ENCODE measurements at regions of chr17 and their contacts with region 1.

Region 1: GRCh38 chr17:74961657-74962490 is 10.7 kb downstream of the HID1 start:
- DNase-seq: peak; percentile 87
- ATAC-seq: peak; percentile 72
- H3K4me3 ChIP-seq: no peak overlapping the region
- H3K4me3 Mint-ChIP-seq: no peak overlapping the region
- H3K27ac ChIP-seq: no peak overlapping the region
- H3K27ac Mint-ChIP-seq: no peak overlapping the region
- H3K4me1 ChIP-seq: peaks cover 2 to 16% of the 10 kb centered on the region in 2 donors
- H3K4me1 Mint-ChIP-seq: peaks cover 7% of the 10 kb centered on the region
- H3K27me3 ChIP-seq: peaks cover 0 to 9% (median 0%) of the 10 kb centered on the region in 4 experiments
- H3K27me3 Mint-ChIP-seq: peaks cover 11% of the 10 kb centered on the region
- CTCF ChIP-seq: peak; percentile 88

Region 2: GRCh38 chr17:74552037-74552436 is 409.8 kb before region 1 on chr17:
- CTCF ChIA-PET with region 1: no interaction called
- POLR2A ChIA-PET with region 1: no interaction called
- intact Hi-C with region 1: no loop called
- DNase-seq: no peak
- ATAC-seq: no peak
- H3K4me3 ChIP-seq: no peak overlapping the region
- H3K4me3 Mint-ChIP-seq: no peak overlapping the region
- H3K27ac ChIP-seq: no peak overlapping the region
- H3K27ac Mint-ChIP-seq: no peak overlapping the region
- H3K4me1 ChIP-seq: peaks cover 0 to 5% of the 10 kb centered on the region in 2 donors
- H3K4me1 Mint-ChIP-seq: no peaks in the 10 kb centered on the region
- H3K27me3 ChIP-seq: peaks cover 0 to 4% (median 1%) of the 10 kb centered on the region in 4 experiments
- H3K27me3 Mint-ChIP-seq: peaks cover 12% of the 10 kb centered on the region
- CTCF ChIP-seq: no peak

Region 3: GRCh38 chr17:74790161-74791054 is 171.5 kb before region 1 on chr17:
- CTCF ChIA-PET with region 1: interaction called, 14 read pairs
- POLR2A ChIA-PET with region 1: no interaction called
- intact Hi-C with region 1: no loop called
- DNase-seq: no peak
- ATAC-seq: no peak
- H3K4me3 ChIP-seq: no peak overlapping the region
- H3K4me3 Mint-ChIP-seq: no peak overlapping the region
- H3K27ac ChIP-seq: no peak overlapping the region
- H3K27ac Mint-ChIP-seq: no peak overlapping the region
- H3K4me1 ChIP-seq: peaks cover 8 to 24% of the 10 kb centered on the region in 2 donors
- H3K4me1 Mint-ChIP-seq: peaks cover 22% of the 10 kb centered on the region
- H3K27me3 ChIP-seq: no peaks in the 10 kb centered on the region
- H3K27me3 Mint-ChIP-seq: no peaks in the 10 kb centered on the region
- CTCF ChIP-seq: no peak

Region 4: GRCh38 chr17:74981979-74982662 is 20.2 kb after region 1 on chr17:
- CTCF ChIA-PET with region 1: interaction called, 67 read pairs
- POLR2A ChIA-PET with region 1: no interaction called
- intact Hi-C with region 1: loop called (anchors 1 kb)
- DNase-seq: peak; percentile 81
- ATAC-seq: peak; percentile 94
- H3K4me3 ChIP-seq: peak overlapping the region; percentile 60 to 73 (median 63)
- H3K4me3 Mint-ChIP-seq: peak overlapping the region; percentile 94
- H3K27ac ChIP-seq: no peak overlapping the region
- H3K27ac Mint-ChIP-seq: peak overlapping the region; percentile 76
- H3K4me1 ChIP-seq: peaks cover 16 to 23% of the 10 kb centered on the region in 2 donors
- H3K4me1 Mint-ChIP-seq: peaks cover 15% of the 10 kb centered on the region
- H3K27me3 ChIP-seq: peaks cover 0 to 55% (median 13%) of the 10 kb centered on the region in 4 experiments
- H3K27me3 Mint-ChIP-seq: peaks cover 24% of the 10 kb centered on the region
- CTCF ChIP-seq: no peak

Region 5: GRCh38 chr17:75034236-75034908 is 72.5 kb after region 1 on chr17:
- CTCF ChIA-PET with region 1: interaction called, 10 read pairs
- POLR2A ChIA-PET with region 1: no interaction called
- intact Hi-C with region 1: no loop called
- DNase-seq: peak; percentile 87
- ATAC-seq: peak; percentile 70
- H3K4me3 ChIP-seq: peak overlapping the region; percentile 59 to 81 (median 71)
- H3K4me3 Mint-ChIP-seq: peak overlapping the region; percentile 99
- H3K27ac ChIP-seq: peak overlapping the region in 1 of 2 donors; percentile 69
- H3K27ac Mint-ChIP-seq: peak overlapping the region; percentile 97
- H3K4me1 ChIP-seq: peaks cover 15 to 34% of the 10 kb centered on the region in 2 donors
- H3K4me1 Mint-ChIP-seq: peaks cover 34% of the 10 kb centered on the region
- H3K27me3 ChIP-seq: no peaks in the 10 kb centered on the region
- H3K27me3 Mint-ChIP-seq: no peaks in the 10 kb centered on the region
- CTCF ChIP-seq: no peak

Region 6: GRCh38 chr17:75131280-75132017 is 169.6 kb after region 1 on chr17 and contains the start of gene NT5C:
- CTCF ChIA-PET with region 1: interaction called, 13 read pairs
- POLR2A ChIA-PET with region 1: interaction called, 3 read pairs
- intact Hi-C with region 1: no loop called
- DNase-seq: peak; percentile 88
- ATAC-seq: peak; percentile 83
- H3K4me3 ChIP-seq: peak within 1 kb of the TSS; percentile 40 to 95 (median 87)
- H3K4me3 Mint-ChIP-seq: peak within 1 kb of the TSS; percentile 90
- H3K27ac ChIP-seq: peak within 1 kb of the TSS; percentile 64 to 85
- H3K27ac Mint-ChIP-seq: peak within 1 kb of the TSS; percentile 96
- H3K4me1 ChIP-seq: peaks cover 11 to 25% of the 10 kb centered on the region in 2 donors
- H3K4me1 Mint-ChIP-seq: peaks cover 35% of the 10 kb centered on the region
- H3K27me3 ChIP-seq: no peaks in the 10 kb centered on the region
- H3K27me3 Mint-ChIP-seq: no peaks in the 10 kb centered on the region
- CTCF ChIP-seq: peak; percentile 73
- total RNA-seq, gene NT5C: 98.9 and 103 TPM in 2 replicates

Region 7: GRCh38 chr17:75271233-75271954 is 309.5 kb after region 1 on chr17:
- CTCF ChIA-PET with region 1: interaction called, 4 read pairs
- POLR2A ChIA-PET with region 1: no interaction called
- intact Hi-C with region 1: loop called (anchors 1 kb)
- DNase-seq: peak; percentile 94
- ATAC-seq: peak; percentile 90
- H3K4me3 ChIP-seq: peak overlapping the region; percentile 26 to 93 (median 74)
- H3K4me3 Mint-ChIP-seq: peak overlapping the region; percentile 88
- H3K27ac ChIP-seq: peak overlapping the region; percentile 78 to 83
- H3K27ac Mint-ChIP-seq: peak overlapping the region; percentile 82
- H3K4me1 ChIP-seq: peaks cover 17 to 28% of the 10 kb centered on the region in 2 donors
- H3K4me1 Mint-ChIP-seq: peaks cover 23% of the 10 kb centered on the region
- H3K27me3 ChIP-seq: no peaks in the 10 kb centered on the region
- H3K27me3 Mint-ChIP-seq: no peaks in the 10 kb centered on the region
- CTCF ChIP-seq: peak; percentile 73

Measured in B cell (primary cell).